ENCODE measurements at regions of chr15 and their contacts with region 1.

Region 1: DNA sequence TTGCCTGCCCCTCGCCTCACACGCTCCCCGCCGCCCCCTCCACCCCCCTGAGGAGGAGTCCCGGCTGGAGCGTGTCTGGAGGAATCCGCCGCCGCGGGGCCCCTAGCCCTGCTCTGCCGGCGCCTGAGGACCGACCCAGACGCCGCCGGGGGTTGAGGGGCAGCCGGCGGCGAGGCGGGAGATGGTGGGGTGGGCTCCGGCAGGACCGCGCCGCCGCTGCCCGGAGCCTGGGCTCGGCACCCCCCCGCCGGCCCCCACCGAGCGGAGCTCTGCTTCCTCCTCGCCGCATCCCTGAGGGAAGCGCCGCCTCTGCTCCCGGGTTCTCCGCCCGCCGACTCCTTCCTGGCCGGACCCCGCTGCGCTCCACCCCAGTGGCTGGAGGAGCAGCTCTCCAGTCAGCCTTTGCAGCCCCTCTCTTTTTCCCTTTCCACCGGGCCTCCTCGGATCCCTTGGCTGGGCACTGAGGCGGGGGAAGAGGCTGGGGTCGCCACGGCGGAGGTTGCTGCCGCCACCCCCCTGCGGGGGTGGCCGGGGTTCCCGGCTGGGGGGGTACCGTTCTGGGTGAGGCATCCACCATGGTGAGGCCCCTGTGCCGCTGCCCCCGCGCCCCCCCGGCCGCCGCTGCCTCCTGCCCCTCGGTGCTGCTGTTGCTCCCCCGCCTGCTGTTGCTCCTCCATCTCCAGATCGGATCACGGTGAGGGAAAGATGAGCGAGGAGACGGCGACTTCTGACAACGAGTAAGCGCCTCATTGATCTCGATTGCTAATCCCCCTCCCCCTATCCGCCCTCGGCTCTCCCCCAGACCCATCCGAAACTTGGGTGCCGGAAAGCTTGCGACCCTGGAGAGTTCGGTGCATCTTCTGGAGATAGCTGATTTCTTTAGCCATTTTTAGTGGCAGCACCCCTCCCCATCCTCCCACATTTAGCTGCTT is at the start of gene SPRED1:
- DNase-seq: peak in 1 of 2 experiments; percentile 63
- H3K4me3 ChIP-seq: peak within 1 kb of the TSS; percentile 89 to 94 (median 92)
- H3K27ac ChIP-seq: peak within 1 kb of the TSS; percentile 96
- H3K4me1 ChIP-seq: peaks cover 3 to 17% (median 12%) of the 10 kb centered on the region in 4 experiments
- H3K27me3 ChIP-seq: no peaks in the 10 kb centered on the region
- CTCF ChIP-seq: no peak
- EP300 ChIP-seq: no peak
- POLR2A ChIP-seq: no peak
- RAD21 ChIP-seq: no peak
- total RNA-seq, gene SPRED1: 30.3 and 32.6 TPM in 2 replicates

Region 2: GRCh38 chr15:38059665-38060064 is 193.1 kb before region 1 on chr15:
- CTCF ChIA-PET with region 1: interaction called, 9 read pairs
- POLR2A ChIA-PET with region 1: interaction called, 20 read pairs
- DNase-seq: no peak
- H3K4me3 ChIP-seq: no peak overlapping the region
- H3K27ac ChIP-seq: peak overlapping the region; percentile 44; the same call in 1 of the 2 replicates
- H3K4me1 ChIP-seq: peaks cover 2 to 21% (median 14%) of the 10 kb centered on the region in 4 experiments; a peak in 6 of 7 replicates
- H3K27me3 ChIP-seq: no peaks in the 10 kb centered on the region
- CTCF ChIP-seq: no peak
- EP300 ChIP-seq: no peak
- POLR2A ChIP-seq: no peak
- RAD21 ChIP-seq: no peak

Region 3: GRCh38 chr15:38072348-38073177 is 180.2 kb before region 1 on chr15:
- CTCF ChIA-PET with region 1: interaction called, 8 read pairs
- POLR2A ChIA-PET with region 1: interaction called, 30 read pairs
- DNase-seq: peak; percentile 83 to 86
- H3K4me3 ChIP-seq: peak overlapping the region; percentile 59 to 65 (median 63)
- H3K27ac ChIP-seq: peak overlapping the region; percentile 73
- H3K4me1 ChIP-seq: peaks cover 0 to 19% (median 11%) of the 10 kb centered on the region in 4 experiments; a peak in 5 of 7 replicates
- H3K27me3 ChIP-seq: peaks cover 22 to 51% (median 38%) of the 10 kb centered on the region in 4 experiments
- CTCF ChIP-seq: peak in 1 of 3 experiments; percentile 14; a peak in 2 of 4 replicates
- EP300 ChIP-seq: 0 out of 3 replicates have a peak, but pooled peaks of 1 of the 2 experiments have one; percentile 49
- POLR2A ChIP-seq: peak; percentile 57 to 86
- RAD21 ChIP-seq: peak in 1 of 2 experiments; percentile 35

Region 4: GRCh38 chr15:38168467-38169070 is 84.2 kb before region 1 on chr15:
- CTCF ChIA-PET with region 1: no interaction called
- POLR2A ChIA-PET with region 1: no interaction called
- DNase-seq: no peak
- H3K4me3 ChIP-seq: no peak overlapping the region
- H3K27ac ChIP-seq: no peak overlapping the region
- H3K4me1 ChIP-seq: peaks cover 0 to 14% (median 4%) of the 10 kb centered on the region in 4 experiments; a peak in 5 of 7 replicates
- H3K27me3 ChIP-seq: no peaks in the 10 kb centered on the region
- CTCF ChIP-seq: no peak
- EP300 ChIP-seq: no peak
- POLR2A ChIP-seq: no peak
- RAD21 ChIP-seq: no peak

Region 5: GRCh38 chr15:38242055-38242454 is 10.7 kb before region 1 on chr15:
- CTCF ChIA-PET with region 1: interaction called, 3 read pairs
- POLR2A ChIA-PET with region 1: interaction called, 21 read pairs
- DNase-seq: no peak
- H3K4me3 ChIP-seq: no peak overlapping the region
- H3K27ac ChIP-seq: no peak overlapping the region
- H3K4me1 ChIP-seq: peaks cover 0 to 2% (median 0%) of the 10 kb centered on the region in 4 experiments; a peak in 1 of 7 replicates
- H3K27me3 ChIP-seq: no peaks in the 10 kb centered on the region
- CTCF ChIP-seq: no peak
- EP300 ChIP-seq: no peak
- POLR2A ChIP-seq: no peak
- RAD21 ChIP-seq: no peak

Region 6: GRCh38 chr15:38266247-38266986 is 13.7 kb after region 1 on chr15:
- CTCF ChIA-PET with region 1: interaction called, 16 read pairs
- POLR2A ChIA-PET with region 1: interaction called, 52 read pairs
- DNase-seq: no peak
- H3K4me3 ChIP-seq: no peak overlapping the region
- H3K27ac ChIP-seq: no peak overlapping the region
- H3K4me1 ChIP-seq: peaks cover 2 to 15% (median 4%) of the 10 kb centered on the region in 4 experiments; a peak in 5 of 7 replicates
- H3K27me3 ChIP-seq: no peaks in the 10 kb centered on the region
- CTCF ChIP-seq: no peak
- EP300 ChIP-seq: no peak
- POLR2A ChIP-seq: no peak
- RAD21 ChIP-seq: no peak

Region 7: GRCh38 chr15:38378161-38378560 is 125.4 kb after region 1 on chr15:
- CTCF ChIA-PET with region 1: no interaction called
- POLR2A ChIA-PET with region 1: no interaction called
- DNase-seq: no peak
- H3K4me3 ChIP-seq: no peak overlapping the region
- H3K27ac ChIP-seq: no peak overlapping the region
- H3K4me1 ChIP-seq: no peaks in the 10 kb centered on the region
- H3K27me3 ChIP-seq: no peaks in the 10 kb centered on the region
- CTCF ChIP-seq: no peak
- EP300 ChIP-seq: no peak
- POLR2A ChIP-seq: no peak
- RAD21 ChIP-seq: no peak

Region 8: DNA sequence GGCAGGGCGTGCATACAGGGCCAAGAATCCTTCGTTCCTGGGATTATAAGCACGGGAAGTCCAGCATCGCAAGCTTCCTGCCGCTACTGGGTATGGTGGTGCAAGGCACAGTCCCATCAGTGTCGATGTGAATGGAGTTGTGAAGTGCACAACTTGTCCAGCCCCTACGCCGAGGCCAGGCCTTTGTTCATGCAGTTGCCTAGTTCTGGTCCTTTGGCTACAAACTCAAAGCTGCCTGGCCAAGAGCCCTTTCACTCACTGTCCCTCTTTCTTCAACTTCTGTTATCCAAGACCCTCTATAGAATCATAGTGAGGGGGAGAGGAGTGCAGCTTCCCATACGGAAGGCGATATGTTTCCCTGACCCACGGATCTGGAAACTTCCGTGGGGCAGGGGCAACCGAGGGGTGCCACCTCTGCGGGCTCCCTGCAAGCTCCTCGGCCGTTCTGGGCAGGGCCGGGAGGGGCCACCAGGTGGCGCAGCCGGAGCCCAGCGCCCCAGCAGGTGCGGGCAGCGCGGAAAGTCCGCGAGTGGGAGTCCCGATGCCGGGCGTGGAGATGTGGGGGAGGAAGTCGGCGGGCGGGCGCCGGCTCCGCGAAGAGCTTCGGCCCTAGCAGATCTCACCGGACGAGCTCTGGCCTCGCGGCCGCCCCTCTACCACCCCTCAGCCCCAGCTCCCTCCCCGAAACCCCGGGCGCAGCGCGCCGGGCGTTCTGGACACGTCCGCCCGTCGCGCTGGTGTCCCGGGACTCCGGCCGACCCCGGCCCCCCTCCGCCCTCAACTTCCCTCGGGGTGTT is 311.2 kb after region 1 on chr15:
- CTCF ChIA-PET with region 1: no interaction called
- POLR2A ChIA-PET with region 1: no interaction called
- DNase-seq: peak in 1 of 2 experiments; percentile 90
- H3K4me3 ChIP-seq: peak overlapping the region; percentile 27 to 78 (median 56)
- H3K27ac ChIP-seq: no peak overlapping the region
- H3K4me1 ChIP-seq: no peaks in the 10 kb centered on the region; a peak in 2 of 7 replicates
- H3K27me3 ChIP-seq: peaks cover 9 to 31% (median 16%) of the 10 kb centered on the region in 4 experiments; a peak in 6 of 7 replicates
- CTCF ChIP-seq: peak; percentile 71 to 84 (median 82)
- EP300 ChIP-seq: no peak
- POLR2A ChIP-seq: no peak
- RAD21 ChIP-seq: peak; percentile 36 to 61; a peak in 3 of 4 replicates